ENCODE measurements at regions of chrX and their contacts with region 1.

Region 1: DNA sequence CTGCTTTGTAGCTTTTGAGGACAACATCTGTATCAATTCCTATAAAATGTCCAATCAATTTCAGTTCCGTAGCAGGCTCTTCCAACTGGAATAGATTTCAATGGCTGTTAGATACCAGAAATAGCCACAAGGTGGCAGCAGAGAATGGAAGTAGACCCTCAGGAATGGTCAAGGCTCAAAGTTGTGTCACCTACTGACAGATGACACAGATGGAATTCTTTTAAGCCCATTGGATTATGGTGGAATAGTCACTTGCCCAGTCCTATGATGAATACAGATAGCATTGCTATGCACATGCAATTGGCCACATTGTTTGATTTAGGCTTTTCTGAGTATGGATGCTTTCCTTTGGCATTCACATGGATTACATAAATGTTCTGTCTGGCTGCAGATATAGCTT is 130.4 kb upstream of the RADX start:
- DNase-seq: peak in 3 of 5 donors; percentile 4 to 25 (median 19)
- H3K4me3 ChIP-seq: no peak overlapping the region
- H3K4me3 Mint-ChIP-seq: no peak overlapping the region
- H3K27ac ChIP-seq: no peak overlapping the region
- H3K27ac Mint-ChIP-seq: no peak overlapping the region
- H3K4me1 ChIP-seq: no peaks in the 10 kb centered on the region
- H3K4me1 Mint-ChIP-seq: peaks cover 25 to 29% (median 28%) of the 10 kb centered on the region in 3 donors
- H3K27me3 ChIP-seq: no peaks in the 10 kb centered on the region
- H3K27me3 Mint-ChIP-seq: no peaks in the 10 kb centered on the region

Region 2: DNA sequence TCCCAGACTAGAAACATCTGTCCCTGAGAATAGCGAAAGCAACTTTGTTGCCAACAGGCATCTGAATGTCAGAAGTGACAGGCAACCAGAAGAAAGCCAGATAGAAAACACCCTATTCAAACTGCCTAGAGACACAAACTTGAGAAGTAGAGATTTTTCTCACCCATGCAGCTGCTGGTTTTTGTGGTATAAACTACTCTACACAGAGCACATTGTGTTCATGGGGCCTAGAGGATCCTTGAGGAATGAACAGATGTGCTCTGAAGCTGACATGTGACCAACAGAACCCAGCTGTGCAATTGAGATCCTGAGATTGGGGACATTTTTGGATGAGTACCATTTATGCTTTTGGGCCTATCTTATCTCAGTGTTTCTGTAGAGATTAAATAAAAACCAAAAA is 722.6 kb before region 1 on chrX:
- CTCF ChIA-PET with region 1: no interaction called
- POLR2A ChIA-PET with region 1: no interaction called
- DNase-seq: no peak
- H3K4me3 ChIP-seq: no peak overlapping the region
- H3K4me3 Mint-ChIP-seq: no peak overlapping the region
- H3K27ac ChIP-seq: no peak overlapping the region
- H3K27ac Mint-ChIP-seq: no peak overlapping the region
- H3K4me1 ChIP-seq: no peaks in the 10 kb centered on the region
- H3K4me1 Mint-ChIP-seq: no peaks in the 10 kb centered on the region
- H3K27me3 ChIP-seq: no peaks in the 10 kb centered on the region
- H3K27me3 Mint-ChIP-seq: peaks cover 0 to 7% of the 10 kb centered on the region in 2 donors

Region 3: GRCh38 chrX:106450405-106450804 is 30.9 kb before region 1 on chrX:
- CTCF ChIA-PET with region 1: no interaction called
- POLR2A ChIA-PET with region 1: no interaction called
- DNase-seq: no peak
- H3K4me3 ChIP-seq: no peak overlapping the region
- H3K4me3 Mint-ChIP-seq: no peak overlapping the region
- H3K27ac ChIP-seq: no peak overlapping the region
- H3K27ac Mint-ChIP-seq: no peak overlapping the region
- H3K4me1 ChIP-seq: no peaks in the 10 kb centered on the region
- H3K4me1 Mint-ChIP-seq: peaks cover 0 to 7% (median 5%) of the 10 kb centered on the region in 3 donors
- H3K27me3 ChIP-seq: no peaks in the 10 kb centered on the region
- H3K27me3 Mint-ChIP-seq: peaks cover 2 to 6% of the 10 kb centered on the region in 2 donors

Region 4: GRCh38 chrX:106619797-106620196 is 138.5 kb after region 1 on chrX:
- CTCF ChIA-PET with region 1: interaction called, 11 read pairs
- POLR2A ChIA-PET with region 1: no interaction called
- DNase-seq: no peak
- H3K4me3 ChIP-seq: no peak overlapping the region
- H3K4me3 Mint-ChIP-seq: no peak overlapping the region
- H3K27ac ChIP-seq: no peak overlapping the region
- H3K27ac Mint-ChIP-seq: no peak overlapping the region
- H3K4me1 ChIP-seq: no peaks in the 10 kb centered on the region
- H3K4me1 Mint-ChIP-seq: peaks cover 0 to 13% (median 0%) of the 10 kb centered on the region in 3 donors
- H3K27me3 ChIP-seq: no peaks in the 10 kb centered on the region
- H3K27me3 Mint-ChIP-seq: peaks cover 0 to 3% of the 10 kb centered on the region in 2 donors

Region 5: GRCh38 chrX:106631615-106632014 is 150.3 kb after region 1 on chrX:
- CTCF ChIA-PET with region 1: no interaction called
- POLR2A ChIA-PET with region 1: no interaction called
- DNase-seq: no peak
- H3K4me3 ChIP-seq: no peak overlapping the region
- H3K4me3 Mint-ChIP-seq: no peak overlapping the region
- H3K27ac ChIP-seq: no peak overlapping the region
- H3K27ac Mint-ChIP-seq: peak overlapping the region in 1 of 8 donors; percentile 44
- H3K4me1 ChIP-seq: no peaks in the 10 kb centered on the region
- H3K4me1 Mint-ChIP-seq: no peaks in the 10 kb centered on the region
- H3K27me3 ChIP-seq: no peaks in the 10 kb centered on the region
- H3K27me3 Mint-ChIP-seq: peaks cover 0 to 1% of the 10 kb centered on the region in 2 donors

Measured in CD8-positive, alpha-beta memory T cell (primary cell).